GM12878 (cell line): ENCODE measurements at regions of chr11 and their contacts with region 1.

Region 1: DNA sequence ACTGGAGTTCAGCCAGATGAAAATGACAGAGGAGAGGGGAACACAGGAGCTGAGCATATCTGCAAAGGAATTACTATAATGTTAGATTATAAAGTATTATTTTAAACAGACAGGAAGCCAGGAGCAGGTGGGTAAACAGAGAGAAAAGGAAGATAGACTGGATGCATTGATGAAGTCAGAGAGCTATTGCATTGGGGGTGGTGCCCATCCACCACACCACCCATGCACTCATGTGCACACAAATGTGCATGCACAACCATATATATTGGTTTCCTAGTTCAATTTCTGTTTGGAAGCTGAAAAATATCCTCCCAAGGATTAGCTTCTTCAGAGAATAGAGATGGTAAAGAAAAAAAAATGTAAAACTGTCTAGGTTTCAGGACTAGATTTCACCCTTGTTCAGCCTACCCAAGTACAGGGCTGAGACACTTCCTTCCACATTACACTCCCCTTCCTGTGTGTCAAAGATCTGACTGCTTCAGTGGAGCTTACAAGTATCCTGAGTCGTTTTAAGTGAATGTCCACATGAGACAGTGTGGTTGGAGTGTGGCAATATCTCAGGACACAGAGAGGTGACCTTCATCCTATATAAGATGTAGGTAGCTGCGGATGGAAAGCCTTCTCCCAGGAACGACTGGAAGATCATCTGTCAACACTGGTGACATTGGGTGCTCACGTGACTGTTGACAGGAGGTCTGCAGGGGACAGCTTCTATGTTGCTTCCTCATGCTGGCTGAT is 12.2 kb upstream of the SMPD1 start:
- DNase-seq: no peak
- ATAC-seq: peak; percentile 51
- H3K4me3 ChIP-seq: no peak overlapping the region
- H3K27ac ChIP-seq: no peak overlapping the region
- H3K4me1 ChIP-seq: peaks cover 6% of the 10 kb centered on the region; the same call in 1 of the 2 replicates
- H3K27me3 ChIP-seq: no peaks in the 10 kb centered on the region
- CTCF ChIP-seq: no peak
- EP300 ChIP-seq: no peak
- POLR2A ChIP-seq: no peak
- RAD21 ChIP-seq: no peak

Region 2: DNA sequence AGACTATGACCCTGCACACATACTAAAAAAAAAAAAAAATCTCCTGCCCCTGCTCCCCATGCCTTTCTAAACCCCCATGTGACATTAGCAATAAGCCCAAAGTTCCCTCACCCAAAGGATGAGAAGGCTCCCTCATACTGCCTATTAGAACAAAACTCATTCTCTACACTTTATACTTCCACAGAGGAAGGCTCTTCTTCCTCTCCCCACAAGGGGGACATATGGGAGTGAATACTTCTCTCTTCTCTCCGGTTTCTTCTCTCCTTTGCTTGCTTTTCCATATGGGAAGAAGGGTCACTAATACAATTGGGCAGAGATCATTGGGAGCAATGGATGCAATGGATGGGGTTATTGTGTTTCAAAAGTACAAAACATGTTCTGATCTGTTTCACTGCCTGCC is 394.6 kb before region 1 on chr11:
- CTCF ChIA-PET with region 1: no interaction called
- POLR2A ChIA-PET with region 1: no interaction called
- RAD21 ChIA-PET with region 1: no interaction called
- SMC1A ChIA-PET with region 1: no interaction called
- in situ Hi-C with region 1: no loop called
- intact Hi-C with region 1: no loop called
- DNase-seq: no peak
- ATAC-seq: no peak
- H3K4me3 ChIP-seq: no peak overlapping the region
- H3K27ac ChIP-seq: no peak overlapping the region
- H3K4me1 ChIP-seq: no peaks in the 10 kb centered on the region
- H3K27me3 ChIP-seq: no peaks in the 10 kb centered on the region
- CTCF ChIP-seq: no peak
- EP300 ChIP-seq: no peak
- POLR2A ChIP-seq: no peak
- RAD21 ChIP-seq: no peak

Region 3: DNA sequence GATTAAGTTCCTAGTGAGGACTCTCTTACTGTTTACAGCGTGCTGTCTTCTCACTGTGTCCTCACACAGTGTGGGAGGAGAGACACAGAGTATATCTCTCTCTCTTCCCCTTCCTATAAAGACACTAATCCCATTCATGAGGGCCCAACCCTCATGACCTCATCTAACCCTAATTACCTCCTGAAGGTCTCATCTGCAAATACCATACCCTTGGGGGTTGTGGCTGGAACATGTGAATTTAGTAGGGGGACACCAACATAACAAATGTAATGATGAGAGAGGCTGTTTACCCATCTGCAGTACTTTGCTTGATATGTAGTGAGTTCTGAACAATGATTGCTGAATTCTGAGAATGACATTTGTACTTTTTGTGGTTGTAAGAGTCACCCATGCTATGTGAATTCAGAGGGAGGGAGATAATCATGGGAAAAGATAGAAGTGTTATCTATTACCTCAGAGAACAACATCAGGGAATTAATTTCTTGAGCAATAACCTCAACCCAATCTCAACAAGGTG is 183.9 kb before region 1 on chr11:
- CTCF ChIA-PET with region 1: no interaction called
- POLR2A ChIA-PET with region 1: no interaction called
- RAD21 ChIA-PET with region 1: no interaction called
- SMC1A ChIA-PET with region 1: no interaction called
- in situ Hi-C with region 1: no loop called
- intact Hi-C with region 1: no loop called
- DNase-seq: no peak
- ATAC-seq: peak; percentile 64
- H3K4me3 ChIP-seq: no peak overlapping the region
- H3K27ac ChIP-seq: no peak overlapping the region
- H3K4me1 ChIP-seq: no peaks in the 10 kb centered on the region
- H3K27me3 ChIP-seq: no peaks in the 10 kb centered on the region
- CTCF ChIP-seq: no peak
- EP300 ChIP-seq: no peak
- POLR2A ChIP-seq: no peak
- RAD21 ChIP-seq: no peak

Region 4: GRCh38 chr11:6362873-6363678 is 15.0 kb before region 1 on chr11:
- CTCF ChIA-PET with region 1: interaction called, 39 read pairs
- POLR2A ChIA-PET with region 1: no interaction called
- RAD21 ChIA-PET with region 1: interaction called, 12 read pairs
- SMC1A ChIA-PET with region 1: interaction called, 11 read pairs
- in situ Hi-C with region 1: no loop called
- intact Hi-C with region 1: no loop called
- DNase-seq: no peak
- ATAC-seq: peak; percentile 100
- H3K4me3 ChIP-seq: no peak overlapping the region
- H3K27ac ChIP-seq: no peak overlapping the region
- H3K4me1 ChIP-seq: no peaks in the 10 kb centered on the region
- H3K27me3 ChIP-seq: peaks cover 0 to 2% of the 10 kb centered on the region in 2 experiments; a peak in 1 of 4 replicates
- CTCF ChIP-seq: peak; percentile 88 to 95 (median 91)
- EP300 ChIP-seq: no peak
- POLR2A ChIP-seq: no peak
- RAD21 ChIP-seq: peak; percentile 84

Region 5: DNA sequence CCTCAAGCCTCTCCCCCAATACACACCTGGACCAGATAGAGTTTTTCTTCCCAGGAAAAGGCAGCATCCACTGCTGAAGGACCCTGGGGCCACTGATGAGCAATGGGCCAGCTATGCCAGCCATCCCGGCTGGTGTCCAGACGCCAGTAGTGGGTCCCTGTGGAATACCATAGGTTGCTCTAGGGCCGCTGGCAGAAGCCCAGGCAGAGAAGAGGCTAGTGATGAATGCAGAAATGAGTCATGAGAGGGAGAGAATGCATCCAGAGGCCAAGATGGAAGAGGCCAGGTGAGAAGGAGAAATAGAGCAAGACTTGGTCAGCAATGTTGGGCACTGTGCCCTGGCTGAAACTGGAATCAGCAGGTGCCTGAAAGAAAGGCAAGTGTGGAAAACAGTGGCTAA is 53.8 kb after region 1 on chr11:
- CTCF ChIA-PET with region 1: interaction called, 11 read pairs
- POLR2A ChIA-PET with region 1: no interaction called
- RAD21 ChIA-PET with region 1: interaction called, 305 read pairs
- SMC1A ChIA-PET with region 1: interaction called, 13 read pairs
- in situ Hi-C with region 1: no loop called
- intact Hi-C with region 1: no loop called
- DNase-seq: no peak
- ATAC-seq: no peak
- H3K4me3 ChIP-seq: no peak overlapping the region
- H3K27ac ChIP-seq: no peak overlapping the region
- H3K4me1 ChIP-seq: peaks cover 13% of the 10 kb centered on the region
- H3K27me3 ChIP-seq: no peaks in the 10 kb centered on the region
- CTCF ChIP-seq: no peak
- EP300 ChIP-seq: no peak
- POLR2A ChIP-seq: no peak
- RAD21 ChIP-seq: no peak

Region 6: GRCh38 chr11:6489306-6489705 is 111.2 kb after region 1 on chr11:
- CTCF ChIA-PET with region 1: interaction called, 13 read pairs
- POLR2A ChIA-PET with region 1: no interaction called
- RAD21 ChIA-PET with region 1: interaction called, 14 read pairs
- SMC1A ChIA-PET with region 1: interaction called, 12 read pairs
- in situ Hi-C with region 1: no loop called
- intact Hi-C with region 1: no loop called
- DNase-seq: no peak
- ATAC-seq: no peak
- H3K4me3 ChIP-seq: no peak overlapping the region
- H3K27ac ChIP-seq: no peak overlapping the region
- H3K4me1 ChIP-seq: peaks cover 5% of the 10 kb centered on the region; the same call in 1 of the 2 replicates
- H3K27me3 ChIP-seq: no peaks in the 10 kb centered on the region
- CTCF ChIP-seq: no peak
- EP300 ChIP-seq: no peak
- POLR2A ChIP-seq: 0 out of 2 replicates have a peak, but pooled peaks have one; percentile 4
- RAD21 ChIP-seq: no peak

Region 7: DNA sequence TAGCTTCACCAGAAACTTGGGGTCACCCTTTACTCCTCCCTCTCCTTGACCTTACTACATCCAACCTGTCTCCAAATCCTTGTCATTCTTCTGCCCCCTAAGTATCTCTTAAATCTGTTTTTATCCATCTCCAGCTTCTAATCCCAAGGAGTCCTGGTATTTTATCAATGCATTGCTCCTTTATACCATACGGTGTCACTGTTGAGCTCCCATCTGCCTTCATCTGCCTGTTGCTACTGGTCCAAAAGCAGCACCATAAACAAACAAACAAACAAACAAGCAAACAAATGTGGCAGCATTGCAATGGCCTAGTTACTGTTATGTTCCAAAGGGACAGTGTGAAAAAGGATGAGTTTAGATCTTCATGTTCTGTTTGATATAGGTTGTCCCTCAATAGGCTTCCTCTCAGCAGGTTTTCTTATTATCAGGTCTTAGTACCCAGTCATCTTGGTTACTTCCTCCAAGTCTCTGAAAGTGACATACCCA is 153.2 kb after region 1 on chr11:
- CTCF ChIA-PET with region 1: interaction called, 34 read pairs
- POLR2A ChIA-PET with region 1: no interaction called
- RAD21 ChIA-PET with region 1: interaction called, 19 read pairs
- SMC1A ChIA-PET with region 1: interaction called, 26 read pairs
- in situ Hi-C with region 1: no loop called
- intact Hi-C with region 1: no loop called
- DNase-seq: peak; percentile 27
- ATAC-seq: peak; percentile 80
- H3K4me3 ChIP-seq: no peak overlapping the region
- H3K27ac ChIP-seq: no peak overlapping the region
- H3K4me1 ChIP-seq: peaks cover 8% of the 10 kb centered on the region; the same call in 1 of the 2 replicates
- H3K27me3 ChIP-seq: no peaks in the 10 kb centered on the region
- CTCF ChIP-seq: peak; percentile 66 to 73 (median 70)
- EP300 ChIP-seq: no peak
- POLR2A ChIP-seq: no peak
- RAD21 ChIP-seq: peak; percentile 89

Region 8: DNA sequence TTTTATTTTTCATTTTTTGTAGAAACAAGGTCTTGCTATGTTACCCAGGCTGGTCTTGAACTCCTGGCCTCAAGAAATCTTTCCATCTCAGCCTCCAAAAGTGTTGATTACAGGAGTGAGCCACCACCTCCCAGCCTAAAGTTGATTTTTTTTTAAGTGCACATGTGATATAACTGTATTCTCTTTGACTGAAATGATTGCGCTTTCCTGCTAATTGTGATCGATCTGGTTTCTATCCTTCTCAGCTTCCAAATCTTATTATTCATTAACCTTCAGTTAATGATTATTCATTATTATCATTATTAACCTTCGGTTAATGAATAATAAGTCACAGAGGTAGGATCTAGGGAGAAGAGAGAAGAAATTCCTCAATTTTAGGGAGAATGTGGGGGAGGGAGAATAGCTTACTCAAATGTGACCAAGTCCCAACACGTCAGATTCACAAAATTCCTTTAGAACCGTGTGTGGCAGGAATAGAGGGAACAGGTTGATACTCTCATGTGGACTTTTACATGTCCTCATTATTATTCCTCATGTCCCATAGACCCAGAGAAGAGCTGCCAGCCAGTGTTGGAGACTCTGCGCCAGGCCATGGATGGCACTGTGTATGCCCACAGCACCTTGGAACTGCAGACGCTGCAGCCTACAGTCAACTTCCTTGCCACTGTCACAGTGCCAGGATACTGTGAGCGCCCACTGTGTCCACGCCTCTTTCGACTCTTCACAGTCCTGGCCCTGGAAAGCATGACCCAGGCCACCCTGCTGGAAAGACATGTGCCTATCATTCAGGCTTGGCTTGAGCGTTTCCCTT is 178.3 kb after region 1 on chr11:
- CTCF ChIA-PET with region 1: no interaction called
- POLR2A ChIA-PET with region 1: no interaction called
- RAD21 ChIA-PET with region 1: no interaction called
- SMC1A ChIA-PET with region 1: no interaction called
- in situ Hi-C with region 1: no loop called
- intact Hi-C with region 1: no loop called
- DNase-seq: no peak
- ATAC-seq: no peak
- H3K4me3 ChIP-seq: no peak overlapping the region
- H3K27ac ChIP-seq: no peak overlapping the region
- H3K4me1 ChIP-seq: no peaks in the 10 kb centered on the region
- H3K27me3 ChIP-seq: no peaks in the 10 kb centered on the region
- CTCF ChIP-seq: no peak
- EP300 ChIP-seq: no peak
- POLR2A ChIP-seq: no peak
- RAD21 ChIP-seq: no peak

Region 9: DNA sequence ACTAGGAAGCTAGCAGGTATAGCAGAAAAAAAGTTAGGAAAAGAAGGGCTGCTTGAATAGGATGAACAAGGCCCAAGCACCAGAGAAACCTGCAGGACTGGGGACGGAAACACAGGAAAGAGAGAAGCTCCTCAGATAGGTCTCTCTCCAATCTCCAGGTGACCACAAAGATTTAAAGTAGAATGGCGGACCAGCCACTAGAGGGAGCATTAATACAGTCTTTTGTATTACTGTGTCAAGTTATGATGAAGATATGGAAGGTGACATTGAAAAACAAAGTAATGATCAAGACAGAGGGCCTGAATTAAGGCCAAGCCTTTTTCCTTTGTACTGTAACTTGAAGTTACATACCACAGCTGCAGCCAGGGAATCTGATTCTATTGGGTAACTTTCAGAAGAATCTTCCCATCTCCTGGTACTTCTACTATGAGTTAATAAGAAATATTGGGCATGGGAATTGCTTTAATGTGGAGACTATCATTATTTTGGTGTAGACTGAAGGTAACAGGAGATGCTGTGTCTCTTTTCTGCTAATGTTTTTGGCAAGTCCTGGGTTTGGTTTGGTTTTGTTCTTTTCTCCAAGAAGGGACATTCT is 359.9 kb after region 1 on chr11:
- CTCF ChIA-PET with region 1: interaction called, 20 read pairs
- POLR2A ChIA-PET with region 1: no interaction called
- RAD21 ChIA-PET with region 1: interaction called, 7 read pairs
- SMC1A ChIA-PET with region 1: interaction called, 8 read pairs
- in situ Hi-C with region 1: no loop called
- intact Hi-C with region 1: no loop called
- DNase-seq: no peak
- ATAC-seq: peak; percentile 87
- H3K4me3 ChIP-seq: no peak overlapping the region
- H3K27ac ChIP-seq: no peak overlapping the region
- H3K4me1 ChIP-seq: peaks cover 27% of the 10 kb centered on the region
- H3K27me3 ChIP-seq: no peaks in the 10 kb centered on the region
- CTCF ChIP-seq: peak; percentile 67 to 80 (median 73)
- EP300 ChIP-seq: no peak
- POLR2A ChIP-seq: no peak
- RAD21 ChIP-seq: peak; percentile 68